ENCODE measurements at regions of chr5 and their contacts with region 1.

Region 1: DNA sequence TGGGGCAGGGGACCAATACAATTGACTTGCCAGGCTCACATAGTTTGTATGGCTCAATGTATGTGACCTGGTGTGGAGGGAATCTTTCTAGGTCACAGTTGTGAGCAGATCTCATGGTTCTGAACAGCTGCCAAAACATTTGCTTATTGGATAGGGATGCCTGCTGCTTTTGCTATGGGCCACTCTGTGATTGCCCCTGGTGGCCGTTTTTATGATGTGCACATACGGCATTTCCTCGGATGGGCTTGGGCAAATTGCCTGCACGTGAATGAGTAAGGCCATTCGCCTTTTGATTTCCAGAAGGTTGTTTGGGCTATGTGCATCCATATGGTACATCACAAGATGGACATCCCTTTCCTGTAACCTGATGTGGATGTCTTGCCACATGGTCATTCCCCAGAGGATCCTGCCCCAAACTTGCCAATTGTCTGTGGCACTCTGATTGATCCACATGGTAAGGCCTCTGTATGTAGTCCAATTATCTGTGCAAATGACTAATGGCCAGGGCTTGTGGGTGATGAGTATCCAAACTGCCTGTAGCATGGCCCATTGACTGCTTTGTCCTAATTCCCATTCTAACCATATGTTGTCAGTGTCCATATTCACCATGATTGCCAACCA is 10.7 kb upstream of the SLC22A4 start:
- DNase-seq: no peak
- H3K4me3 ChIP-seq: no peak overlapping the region
- H3K27ac ChIP-seq: no peak overlapping the region
- H3K4me1 ChIP-seq: no peaks in the 10 kb centered on the region
- H3K27me3 ChIP-seq: no peaks in the 10 kb centered on the region
- CTCF ChIP-seq: peak in 5 of 6 experiments; percentile 31 to 50 (median 34)
- POLR2A ChIP-seq: no peak

Region 2: GRCh38 chr5:132369474-132370180 is 86.1 kb after region 1 on chr5 and contains the start of gene SLC22A5:
- intact Hi-C with region 1: loop called (anchors 10 kb)
- DNase-seq: no peak
- H3K4me3 ChIP-seq: peak within 1 kb of the TSS; percentile 51 to 80 (median 68)
- H3K27ac ChIP-seq: peak within 1 kb of the TSS; percentile 84 to 92 (median 90)
- H3K4me1 ChIP-seq: peaks cover 18 to 52% (median 30%) of the 10 kb centered on the region in 3 donors
- H3K27me3 ChIP-seq: no peaks in the 10 kb centered on the region
- CTCF ChIP-seq: no peak
- POLR2A ChIP-seq: peak in 2 of 4 donors; percentile 20 to 63
- total RNA-seq, gene SLC22A5: 7.4 to 15.8 (median 8.3) TPM

Measured in esophagus squamous epithelium (tissue), 5 donors.